HepG2 (cell line): ENCODE measurements at regions of chr3 and their contacts with region 1.

Region 1: DNA sequence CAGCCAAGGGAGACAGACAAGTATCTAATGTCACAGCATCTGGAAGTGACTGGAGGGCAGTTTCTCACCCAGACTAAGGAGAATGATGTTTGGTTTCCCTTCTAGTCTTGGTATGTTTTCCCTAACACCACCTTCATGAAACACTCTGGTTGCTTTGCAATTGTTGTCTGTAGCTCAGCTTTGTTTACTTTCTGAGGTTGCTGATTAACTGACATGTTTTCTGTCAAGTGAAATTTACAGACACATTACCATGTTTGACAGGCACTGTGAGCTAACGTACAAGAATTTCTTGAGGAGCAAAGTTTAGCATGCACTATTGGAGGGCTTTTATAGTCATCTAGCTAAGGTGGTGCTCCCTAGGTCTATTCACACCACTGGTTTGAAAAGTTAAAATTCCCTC is 131.6 kb upstream of the NECTIN3 start:
- DNase-seq: peak; percentile 87
- ATAC-seq: peak; percentile 93
- H3K4me3 ChIP-seq: no peak overlapping the region; a peak in 1 of 6 replicates
- H3K27ac ChIP-seq: peak overlapping the region; percentile 67
- H3K4me1 ChIP-seq: peaks cover 53% of the 10 kb centered on the region
- H3K27me3 ChIP-seq: no peaks in the 10 kb centered on the region
- CTCF ChIP-seq: no peak
- EP300 ChIP-seq: peak in 1 of 2 experiments; percentile 82; a peak in 2 of 4 replicates
- POLR2A ChIP-seq: no peak
- RAD21 ChIP-seq: no peak

Region 2: DNA sequence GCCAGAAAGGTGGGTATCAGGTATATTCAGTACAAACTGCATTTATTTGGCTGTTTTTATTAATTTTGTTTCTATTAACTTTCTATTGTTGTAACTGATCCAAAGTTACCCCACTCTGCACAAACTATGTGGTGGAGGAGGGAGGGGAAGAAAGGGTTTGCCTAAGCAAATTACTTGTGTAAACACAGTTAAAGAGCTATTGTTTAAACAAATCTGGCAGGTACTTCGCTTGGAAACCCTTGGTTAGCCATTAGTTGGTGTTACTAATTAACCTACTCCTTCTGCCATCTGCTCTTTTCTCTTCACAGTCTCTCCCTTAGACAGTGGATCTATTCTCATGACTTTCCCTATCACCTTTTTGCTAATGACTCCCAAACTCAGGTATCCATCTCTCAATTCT is 196.9 kb before region 1 on chr3:
- CTCF ChIA-PET with region 1: no interaction called
- POLR2A ChIA-PET with region 1: no interaction called
- in situ Hi-C with region 1: no loop called
- intact Hi-C with region 1: loop called (anchors 10 kb)
- DNase-seq: peak; percentile 83
- ATAC-seq: peak; percentile 99
- H3K4me3 ChIP-seq: peak overlapping the region in 1 of 3 experiments; percentile 2; a peak in 1 of 6 replicates
- H3K27ac ChIP-seq: no peak overlapping the region
- H3K4me1 ChIP-seq: peaks cover 13% of the 10 kb centered on the region
- H3K27me3 ChIP-seq: peaks cover 0 to 22% of the 10 kb centered on the region in 2 experiments; a peak in 2 of 5 replicates
- CTCF ChIP-seq: no peak
- EP300 ChIP-seq: peak in 1 of 2 experiments; percentile 86; a peak in 2 of 4 replicates
- POLR2A ChIP-seq: no peak
- RAD21 ChIP-seq: no peak

Region 3: DNA sequence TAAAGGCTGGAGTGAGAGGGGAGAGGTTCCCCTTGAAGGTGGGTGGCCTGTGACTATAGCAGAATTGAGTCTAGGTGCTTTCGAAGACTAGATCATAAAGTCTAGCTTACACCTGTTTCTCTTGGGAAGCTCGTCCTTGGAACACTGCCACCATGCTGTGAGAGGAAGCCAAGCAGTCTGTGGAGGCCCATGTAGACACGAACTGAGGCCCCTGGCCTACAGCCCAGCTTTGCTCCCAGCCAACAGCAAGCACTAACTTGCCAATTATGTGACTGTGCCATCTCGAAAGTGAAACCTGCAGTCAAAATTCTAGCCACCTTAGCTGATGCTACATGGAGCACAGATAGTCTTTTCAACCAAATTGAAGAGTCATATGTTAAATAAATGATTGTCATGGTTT is 59.0 kb before region 1 on chr3:
- CTCF ChIA-PET with region 1: no interaction called
- POLR2A ChIA-PET with region 1: no interaction called
- in situ Hi-C with region 1: no loop called
- intact Hi-C with region 1: loop called (anchors 2 kb)
- DNase-seq: peak; percentile 63
- ATAC-seq: peak; percentile 100
- H3K4me3 ChIP-seq: no peak overlapping the region
- H3K27ac ChIP-seq: no peak overlapping the region
- H3K4me1 ChIP-seq: no peaks in the 10 kb centered on the region
- H3K27me3 ChIP-seq: no peaks in the 10 kb centered on the region
- CTCF ChIP-seq: peak; percentile 66
- EP300 ChIP-seq: no peak
- POLR2A ChIP-seq: no peak
- RAD21 ChIP-seq: 0 out of 2 replicates have a peak, but pooled peaks have one; percentile 21

Region 4: GRCh38 chr3:110900576-110900975 is 39.5 kb before region 1 on chr3:
- CTCF ChIA-PET with region 1: no interaction called
- POLR2A ChIA-PET with region 1: no interaction called
- in situ Hi-C with region 1: no loop called
- intact Hi-C with region 1: no loop called
- DNase-seq: no peak
- ATAC-seq: no peak
- H3K4me3 ChIP-seq: no peak overlapping the region
- H3K27ac ChIP-seq: no peak overlapping the region
- H3K4me1 ChIP-seq: no peaks in the 10 kb centered on the region
- H3K27me3 ChIP-seq: no peaks in the 10 kb centered on the region
- CTCF ChIP-seq: no peak
- EP300 ChIP-seq: no peak
- POLR2A ChIP-seq: no peak
- RAD21 ChIP-seq: no peak

Region 5: DNA sequence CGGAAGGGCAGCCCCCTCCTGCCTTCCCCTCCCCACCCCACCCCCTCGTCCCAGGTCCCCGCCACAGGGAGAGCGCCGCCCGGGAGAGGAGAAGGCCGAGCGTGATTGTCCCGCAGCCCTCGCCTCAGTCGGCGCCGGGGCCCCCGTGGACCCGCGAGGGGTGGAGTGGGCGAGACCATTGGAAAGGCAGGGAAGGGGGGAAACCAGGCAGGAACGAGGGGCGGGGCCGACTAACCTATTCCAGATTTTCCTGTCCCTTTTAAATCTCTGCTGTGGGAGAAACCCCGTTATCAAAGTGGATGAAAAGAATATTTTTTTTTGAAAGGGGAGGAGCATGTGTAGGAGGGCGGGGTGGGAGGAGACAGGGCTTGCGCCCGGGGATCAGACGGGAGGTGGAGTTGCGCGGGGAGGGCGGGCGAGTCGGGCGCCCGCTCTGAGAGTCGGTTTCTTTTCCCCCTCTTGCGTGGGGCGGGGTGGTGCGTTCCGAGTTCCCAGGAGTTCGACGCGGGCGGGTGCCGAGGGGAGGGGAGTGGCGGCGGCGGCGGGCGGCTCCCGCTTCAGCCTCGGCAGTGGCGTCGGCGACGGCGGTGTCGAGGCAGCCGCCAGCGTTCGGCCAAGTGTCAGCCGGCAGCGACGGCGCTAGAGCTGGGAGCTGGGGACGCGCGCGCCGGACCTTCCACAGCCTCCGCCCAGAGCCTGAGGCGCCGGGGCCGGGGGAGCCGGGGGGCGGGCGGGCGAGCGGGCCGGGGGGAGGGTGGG is 131.4 kb after region 1 on chr3 and contains the start of gene NECTIN3:
- CTCF ChIA-PET with region 1: no interaction called
- POLR2A ChIA-PET with region 1: no interaction called
- in situ Hi-C with region 1: loop called (anchors 10 kb)
- intact Hi-C with region 1: loop called (anchors 2 kb)
- DNase-seq: peak; percentile 90
- ATAC-seq: peak; percentile 77
- H3K4me3 ChIP-seq: peak within 1 kb of the TSS; percentile 96 to 97 (median 96)
- H3K27ac ChIP-seq: peak within 1 kb of the TSS; percentile 89
- H3K4me1 ChIP-seq: peaks cover 58% of the 10 kb centered on the region
- H3K27me3 ChIP-seq: no peaks in the 10 kb centered on the region; a peak in 1 of 5 replicates
- CTCF ChIP-seq: no peak; the same call in 1 of the 2 replicates
- EP300 ChIP-seq: no peak
- POLR2A ChIP-seq: peak; percentile 8 to 50; a peak in 2 of 4 replicates
- RAD21 ChIP-seq: no peak
- total RNA-seq, gene NECTIN3: 28.7 and 45.1 TPM in 2 replicates